Vagina (tissue), 2 donors: ENCODE measurements at regions of chr13 and their contacts with region 1.

Region 1: DNA sequence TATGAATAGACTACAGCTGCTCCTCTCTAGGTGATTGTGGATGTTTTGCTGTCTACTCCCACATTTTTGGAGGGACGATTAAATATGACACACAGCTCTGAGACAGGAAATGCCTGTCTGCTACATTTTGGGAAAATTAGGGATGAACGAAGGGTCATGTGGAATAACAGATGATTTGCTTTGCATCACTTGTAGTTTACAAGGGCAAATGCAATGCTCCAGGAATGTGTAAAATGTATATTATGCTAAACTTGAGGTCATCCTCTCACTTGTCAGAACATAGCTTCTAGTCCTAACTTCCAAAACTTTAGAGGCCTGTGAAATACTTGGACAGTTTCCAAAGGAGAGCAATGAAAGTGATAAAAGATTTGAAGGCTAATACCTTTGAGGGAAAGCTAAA is 284.2 kb upstream of the DACH1 start:
- DNase-seq: no peak
- H3K4me3 ChIP-seq: no peak overlapping the region
- H3K27ac ChIP-seq: no peak overlapping the region
- H3K4me1 ChIP-seq: no peaks in the 10 kb centered on the region
- H3K27me3 ChIP-seq: no peaks in the 10 kb centered on the region
- CTCF ChIP-seq: no peak
- POLR2A ChIP-seq: no peak

Region 2: DNA sequence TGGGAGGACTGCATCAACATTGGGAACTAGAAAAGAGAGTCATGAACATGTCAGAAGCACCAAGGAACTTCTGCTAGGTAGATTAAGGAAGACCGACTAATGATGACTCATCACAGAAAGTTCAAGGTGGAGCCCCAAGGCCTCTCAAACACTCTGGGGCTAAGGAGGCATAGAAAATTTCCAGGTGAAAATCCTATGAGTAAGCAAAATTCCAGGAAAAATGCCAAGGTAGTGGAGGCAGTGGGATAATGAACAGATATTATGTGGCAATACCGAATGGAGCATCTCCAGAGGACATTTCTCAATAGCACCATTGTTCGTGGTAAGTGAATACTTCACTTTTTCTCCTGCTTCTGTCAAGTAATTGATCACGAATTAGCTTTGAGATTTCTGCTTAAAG is 239.7 kb after region 1 on chr13:
- intact Hi-C with region 1: loop called (anchors 10 kb)
- DNase-seq: no peak
- H3K4me3 ChIP-seq: no peak overlapping the region
- H3K27ac ChIP-seq: no peak overlapping the region
- H3K4me1 ChIP-seq: no peaks in the 10 kb centered on the region
- H3K27me3 ChIP-seq: no peaks in the 10 kb centered on the region
- CTCF ChIP-seq: no peak
- POLR2A ChIP-seq: no peak